Right ventricle myocardium inferior (tissue), 1 donor: ENCODE measurements at regions of chrX and their contacts with region 1.

Region 1: GRCh38 chrX:71637848-71638247 is 19.5 kb upstream of the CXCR3 start:
- DNase-seq: no peak
- ATAC-seq: no peak

Region 2: DNA sequence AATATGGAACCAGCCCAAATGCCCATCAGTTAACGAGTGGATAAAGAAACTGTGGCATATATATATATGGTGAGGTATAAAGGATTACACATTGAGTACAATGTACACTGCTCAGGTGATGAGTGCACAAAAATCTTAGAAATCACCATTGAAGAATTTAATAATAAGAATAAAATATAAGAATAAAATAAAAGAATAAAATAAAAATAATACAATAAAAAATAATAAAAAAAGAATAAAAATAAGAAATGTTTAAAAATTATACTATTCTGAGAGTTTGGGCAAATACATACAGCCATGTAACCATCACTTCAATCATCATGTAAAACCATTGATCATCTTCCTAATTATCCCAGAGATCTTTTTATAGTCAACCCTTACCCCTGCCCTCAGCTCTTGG is 1761.6 kb before region 1 on chrX:
- intact Hi-C with region 1: no loop called
- DNase-seq: no peak
- ATAC-seq: no peak

Region 3: DNA sequence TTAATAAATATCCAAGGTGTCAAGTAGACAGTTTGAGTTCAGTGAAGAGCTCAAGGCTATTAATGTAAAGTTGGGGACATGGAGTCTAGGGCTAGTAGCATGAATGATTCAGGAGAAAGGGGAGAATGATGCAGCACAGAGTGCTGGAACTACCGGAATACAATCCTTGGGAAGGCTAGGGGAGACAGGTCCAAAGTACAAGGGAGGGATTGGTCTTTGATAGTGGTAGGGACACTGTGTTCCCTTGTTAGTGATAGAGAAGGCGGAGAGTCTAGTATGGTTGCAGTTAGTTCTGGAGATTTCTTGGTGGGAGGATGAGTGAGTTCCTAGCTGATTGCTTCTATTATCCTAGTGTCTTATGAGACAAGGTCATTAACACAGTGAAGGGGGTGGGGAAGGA is 50.9 kb before region 1 on chrX:
- intact Hi-C with region 1: loop called (anchors 10 kb)
- DNase-seq: no peak
- ATAC-seq: no peak